Dendritic cell treated with granulocyte-macrophage colony-stimulating factor and Interleukin-4, amounts not matched to agents 40 ng/mL and 50 ng/mL, for 4 days (primary cell): ENCODE measurements at regions of chr1 and their contacts with region 1.

Region 1: GRCh38 chr1:154479764-154480421 is 22.1 kb upstream of the TDRD10 start:
- H3K4me3 Mint-ChIP-seq: no peak overlapping the region
- H3K27ac Mint-ChIP-seq: peak overlapping the region; percentile 18
- H3K4me1 Mint-ChIP-seq: peaks cover 32% of the 10 kb centered on the region
- H3K27me3 Mint-ChIP-seq: peaks cover 2% of the 10 kb centered on the region

Region 2: GRCh38 chr1:154335025-154335714 is 144.7 kb before region 1 on chr1:
- intact Hi-C with region 1: loop called (anchors 5 kb)
- H3K4me3 Mint-ChIP-seq: no peak overlapping the region
- H3K27ac Mint-ChIP-seq: peak overlapping the region; percentile 23
- H3K4me1 Mint-ChIP-seq: peaks cover 32% of the 10 kb centered on the region
- H3K27me3 Mint-ChIP-seq: peaks cover 1% of the 10 kb centered on the region

Region 3: GRCh38 chr1:154431586-154432373 is 48.1 kb before region 1 on chr1:
- intact Hi-C with region 1: loop called (anchors 5 kb)
- H3K4me3 Mint-ChIP-seq: no peak overlapping the region
- H3K27ac Mint-ChIP-seq: peak overlapping the region; percentile 86
- H3K4me1 Mint-ChIP-seq: peaks cover 81% of the 10 kb centered on the region
- H3K27me3 Mint-ChIP-seq: no peaks in the 10 kb centered on the region

Region 4: GRCh38 chr1:154519591-154519991 is 39.7 kb after region 1 on chr1:
- intact Hi-C with region 1: loop called (anchors 5 kb)
- H3K4me3 Mint-ChIP-seq: no peak overlapping the region
- H3K27ac Mint-ChIP-seq: peak overlapping the region; percentile 96
- H3K4me1 Mint-ChIP-seq: peaks cover 54% of the 10 kb centered on the region
- H3K27me3 Mint-ChIP-seq: peaks cover 27% of the 10 kb centered on the region

Region 5: GRCh38 chr1:154546264-154547063 is 66.6 kb after region 1 on chr1:
- intact Hi-C with region 1: loop called (anchors 1 kb)
- H3K4me3 Mint-ChIP-seq: no peak overlapping the region
- H3K27ac Mint-ChIP-seq: no peak overlapping the region
- H3K4me1 Mint-ChIP-seq: peaks cover 51% of the 10 kb centered on the region
- H3K27me3 Mint-ChIP-seq: peaks cover 9% of the 10 kb centered on the region